Ascending aorta (tissue), 2 donors: ENCODE measurements at regions of chr3 and their contacts with region 1.

Region 1: DNA sequence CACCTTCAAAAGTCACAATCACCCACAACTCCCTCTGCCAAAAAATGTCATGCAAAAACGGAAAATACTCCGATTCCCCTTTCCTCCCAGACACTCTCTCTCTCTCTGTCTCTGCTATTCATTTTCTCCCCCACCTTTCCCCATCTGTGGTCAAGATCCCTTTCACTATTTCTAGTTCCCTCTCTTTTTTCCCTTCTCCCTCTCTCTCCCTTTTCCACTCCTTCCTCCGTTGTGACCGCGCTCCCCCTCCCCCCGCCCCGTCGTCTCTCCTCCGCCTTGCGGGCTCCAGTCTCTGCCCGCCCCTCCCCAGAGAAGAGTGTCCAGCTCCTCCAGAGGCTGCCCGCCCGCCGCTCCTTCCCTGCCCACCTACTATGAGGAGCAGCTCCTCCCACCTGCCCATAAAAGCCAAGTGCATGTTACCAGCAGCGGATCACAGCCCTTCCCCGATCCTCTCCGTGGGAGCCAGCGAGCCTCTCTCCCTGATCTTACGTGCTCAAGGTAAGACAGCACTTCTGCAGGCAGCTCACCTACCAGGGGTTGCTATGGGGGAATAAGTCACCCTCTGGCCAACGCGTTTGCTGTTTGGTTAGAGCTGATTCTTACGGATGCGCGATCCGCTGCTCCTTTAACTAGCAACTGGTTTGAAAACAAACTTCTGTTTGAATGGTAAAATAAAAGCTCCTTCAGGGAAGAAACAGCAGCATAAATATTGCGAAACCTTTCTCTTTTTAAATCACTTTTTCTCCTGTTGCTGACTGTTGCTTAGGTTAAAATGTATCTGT is at the start of gene COL8A1:
- DNase-seq: peak; percentile 62 to 92
- H3K4me3 ChIP-seq: peak within 1 kb of the TSS; percentile 67 to 87
- H3K27ac ChIP-seq: peak within 1 kb of the TSS; percentile 95
- H3K4me1 ChIP-seq: peaks cover 0 to 11% of the 10 kb centered on the region in 2 donors
- H3K27me3 ChIP-seq: no peaks in the 10 kb centered on the region
- CTCF ChIP-seq: no peak
- total RNA-seq, gene COL8A1: 459 TPM

Region 2: DNA sequence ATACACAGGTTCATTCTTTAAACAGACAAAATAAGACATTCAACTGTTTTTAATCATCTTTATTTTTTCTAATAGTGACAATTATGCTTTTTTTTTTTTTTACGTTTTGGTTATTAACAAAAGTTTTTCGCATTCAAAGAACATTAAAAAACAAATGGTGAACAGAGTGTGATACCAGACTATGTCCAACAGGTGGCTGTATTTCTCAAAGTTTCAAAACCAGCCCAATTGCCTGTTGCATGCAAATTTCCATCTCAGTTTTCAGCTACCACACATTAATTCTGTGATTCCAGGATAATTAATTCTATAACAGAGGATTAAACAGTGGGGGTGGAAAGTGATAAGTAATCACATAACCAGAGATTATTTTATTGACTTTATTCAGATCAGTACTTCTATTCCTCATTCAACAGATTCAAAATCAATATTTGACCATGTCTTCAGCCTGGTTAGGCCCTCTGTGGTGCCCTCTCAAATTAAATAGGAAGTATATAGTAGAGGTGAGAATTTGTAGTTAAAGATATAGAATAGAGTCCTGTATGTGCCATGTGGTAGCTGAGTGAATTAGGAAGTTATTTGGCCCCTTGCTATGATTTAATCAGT is 614.7 kb before region 1 on chr3:
- intact Hi-C with region 1: loop called (anchors 5 kb)
- DNase-seq: no peak
- H3K4me3 ChIP-seq: no peak overlapping the region
- H3K27ac ChIP-seq: no peak overlapping the region
- H3K4me1 ChIP-seq: no peaks in the 10 kb centered on the region
- H3K27me3 ChIP-seq: no peaks in the 10 kb centered on the region
- CTCF ChIP-seq: peak; percentile 59 to 68 (median 64)

Region 3: GRCh38 chr3:99128725-99129505 is 509.4 kb before region 1 on chr3:
- intact Hi-C with region 1: loop called (anchors 5 kb)
- DNase-seq: peak in 1 of 2 donors; percentile 81
- H3K4me3 ChIP-seq: no peak overlapping the region
- H3K27ac ChIP-seq: peak overlapping the region; percentile 83 to 88
- H3K4me1 ChIP-seq: peaks cover 9 to 35% of the 10 kb centered on the region in 2 donors
- H3K27me3 ChIP-seq: no peaks in the 10 kb centered on the region
- CTCF ChIP-seq: no peak

Region 4: DNA sequence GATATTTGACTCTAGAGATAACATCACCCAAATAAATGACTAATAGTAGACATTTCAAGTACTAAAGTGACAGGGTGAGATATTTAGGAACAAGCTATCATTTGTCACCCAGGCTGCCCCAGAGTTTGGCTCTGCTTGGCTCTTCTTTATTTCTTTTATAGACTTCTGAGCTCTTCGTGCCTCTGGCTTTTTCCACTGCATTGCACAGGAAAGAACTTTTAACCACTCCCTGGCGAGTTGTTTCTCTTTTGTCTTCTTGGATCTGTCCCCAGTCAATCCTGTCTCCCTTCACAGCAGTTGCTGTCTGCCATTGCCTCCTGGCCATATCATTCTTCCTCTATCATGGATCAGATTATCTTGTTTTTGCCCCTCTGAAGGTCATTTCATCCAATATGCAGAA is 397.7 kb before region 1 on chr3:
- intact Hi-C with region 1: loop called (anchors 10 kb)
- DNase-seq: no peak
- H3K4me3 ChIP-seq: no peak overlapping the region
- H3K27ac ChIP-seq: peak overlapping the region; percentile 78 to 87
- H3K4me1 ChIP-seq: peaks cover 10 to 27% of the 10 kb centered on the region in 2 donors
- H3K27me3 ChIP-seq: no peaks in the 10 kb centered on the region
- CTCF ChIP-seq: no peak

Region 5: DNA sequence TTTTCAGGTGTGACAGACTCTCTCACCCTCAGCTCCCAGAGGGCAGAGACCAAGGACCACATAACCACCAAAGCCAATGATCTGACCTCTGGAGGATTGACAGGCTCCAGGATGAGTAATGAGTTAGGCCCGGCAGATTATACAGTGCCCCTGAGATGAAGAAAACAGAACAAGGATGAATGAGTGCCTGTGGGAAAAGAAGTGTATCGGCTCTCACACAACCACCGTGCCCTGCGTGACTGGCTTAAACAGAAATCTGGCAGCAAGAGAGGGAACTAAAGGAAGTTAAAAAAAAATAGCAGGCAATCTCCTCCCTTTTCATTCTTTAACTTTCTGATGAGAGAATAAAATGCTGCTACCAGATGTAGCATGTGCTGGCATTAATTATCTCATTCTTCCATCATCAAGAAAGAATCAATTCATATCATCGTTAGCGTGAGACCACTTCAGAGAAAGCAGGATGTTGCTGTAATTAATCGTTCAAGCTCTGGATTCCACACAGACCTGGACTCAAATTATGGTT is 227.5 kb before region 1 on chr3:
- intact Hi-C with region 1: loop called (anchors 10 kb)
- DNase-seq: no peak
- H3K4me3 ChIP-seq: no peak overlapping the region
- H3K27ac ChIP-seq: peak overlapping the region in 1 of 2 donors; percentile 23
- H3K4me1 ChIP-seq: peaks cover 0 to 14% of the 10 kb centered on the region in 2 donors
- H3K27me3 ChIP-seq: no peaks in the 10 kb centered on the region
- CTCF ChIP-seq: no peak

Region 6: GRCh38 chr3:99499235-99500158 is 138.9 kb before region 1 on chr3:
- intact Hi-C with region 1: loop called (anchors 2 kb)
- DNase-seq: no peak
- H3K4me3 ChIP-seq: peak overlapping the region in 1 of 2 donors; percentile 1
- H3K27ac ChIP-seq: peak overlapping the region; percentile 72 to 87
- H3K4me1 ChIP-seq: peaks cover 10 to 39% of the 10 kb centered on the region in 2 donors
- H3K27me3 ChIP-seq: no peaks in the 10 kb centered on the region
- CTCF ChIP-seq: peak; percentile 23 to 65 (median 59)

Region 7: GRCh38 chr3:99586701-99587100 is 51.7 kb before region 1 on chr3:
- intact Hi-C with region 1: no loop called
- DNase-seq: no peak
- H3K4me3 ChIP-seq: no peak overlapping the region
- H3K27ac ChIP-seq: no peak overlapping the region
- H3K4me1 ChIP-seq: peaks cover 0 to 2% of the 10 kb centered on the region in 2 donors
- H3K27me3 ChIP-seq: no peaks in the 10 kb centered on the region
- CTCF ChIP-seq: peak in 1 of 3 experiments; percentile 8

Region 8: DNA sequence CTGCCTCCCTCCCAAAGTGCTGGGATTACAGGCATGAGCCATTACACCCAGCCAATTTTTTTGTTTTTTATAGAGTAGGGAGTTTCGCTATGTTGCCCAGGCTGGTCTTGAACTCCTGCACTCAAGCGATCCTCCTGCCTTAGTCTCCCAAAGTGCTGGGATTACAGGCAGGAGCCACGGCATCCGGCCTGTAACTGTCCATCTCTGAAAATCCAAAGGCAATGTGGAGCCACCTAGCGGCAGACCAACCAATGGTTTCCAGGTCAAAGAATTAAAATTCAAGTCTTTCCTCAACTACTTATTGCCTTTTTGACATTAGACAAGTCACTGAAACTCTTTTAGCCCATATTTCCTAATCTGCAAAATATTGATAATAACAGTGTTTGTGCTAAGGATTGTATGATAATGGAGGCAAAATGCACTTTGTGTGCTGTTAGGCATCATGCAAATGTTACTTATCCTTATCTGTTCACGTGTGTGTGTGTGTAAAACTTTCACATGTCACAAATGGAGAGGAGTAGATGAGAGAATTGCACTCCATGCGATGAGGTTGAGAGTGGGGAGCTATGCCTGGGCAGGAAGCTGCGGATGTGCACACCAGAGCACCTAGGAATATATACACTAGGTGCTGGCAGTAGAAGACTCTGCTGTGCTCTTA is 48.7 kb after region 1 on chr3:
- intact Hi-C with region 1: loop called (anchors 2 kb)
- DNase-seq: peak in 1 of 2 donors; percentile 74
- H3K4me3 ChIP-seq: no peak overlapping the region
- H3K27ac ChIP-seq: peak overlapping the region; percentile 21 to 50
- H3K4me1 ChIP-seq: peaks cover 0 to 29% of the 10 kb centered on the region in 2 donors
- H3K27me3 ChIP-seq: no peaks in the 10 kb centered on the region
- CTCF ChIP-seq: peak; percentile 58 to 64 (median 61)